Activated CD8-positive, alpha-beta T cell treated with anti-CD3 and anti-CD28 coated beads for 36 hours (primary cell): ENCODE measurements at regions of chr6 and their contacts with region 1.

Region 1: DNA sequence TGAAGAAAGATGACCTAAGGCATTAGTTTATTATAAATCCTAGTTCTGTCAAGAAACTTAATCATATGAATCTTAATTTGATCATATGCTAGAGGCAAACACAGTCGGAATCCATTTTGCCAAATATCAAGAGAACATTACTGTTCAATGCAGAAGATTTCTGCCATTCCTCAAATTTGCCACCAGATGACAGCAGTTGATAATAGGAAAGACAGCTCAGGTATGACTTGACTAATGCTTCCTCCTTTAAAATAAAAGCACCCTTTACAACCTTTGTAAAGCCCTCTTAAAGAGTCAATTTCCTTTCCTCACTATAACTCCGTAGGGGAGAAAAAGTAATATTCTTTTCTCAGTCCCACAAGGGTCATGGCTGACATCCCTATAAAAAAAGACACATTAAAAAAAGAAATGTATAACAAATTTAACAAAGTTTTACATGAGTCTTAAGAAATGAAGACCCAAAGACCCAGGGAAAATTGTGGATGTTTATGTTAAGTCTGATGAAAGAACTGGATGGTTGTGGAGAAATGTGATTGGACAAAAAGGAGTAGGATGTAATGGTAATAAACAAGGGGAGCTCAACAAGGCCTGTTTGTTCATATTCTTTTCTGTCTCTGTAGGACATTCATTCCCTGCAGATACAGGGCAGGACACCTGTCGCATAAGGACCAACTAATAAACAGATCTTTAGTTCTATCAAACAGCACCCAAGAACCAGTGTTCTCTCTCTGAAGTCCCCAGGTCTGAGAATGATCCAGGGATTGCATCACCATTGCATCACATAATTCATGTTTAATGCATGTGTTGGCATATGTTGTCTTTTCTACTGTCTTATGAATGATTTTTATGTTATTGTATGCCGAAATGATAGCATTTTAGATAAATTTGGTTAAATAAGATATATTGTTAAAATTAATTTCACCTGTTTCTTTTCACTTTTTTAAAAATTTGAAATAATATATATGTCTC is 23.0 kb upstream of the IL17A start:
- DNase-seq: no peak
- ATAC-seq: peak; percentile 48
- H3K4me3 Mint-ChIP-seq: no peak overlapping the region
- H3K27ac Mint-ChIP-seq: peak overlapping the region; percentile 90
- H3K4me1 Mint-ChIP-seq: peaks cover 34% of the 10 kb centered on the region
- H3K27me3 Mint-ChIP-seq: peaks cover 21% of the 10 kb centered on the region
- CTCF ChIP-seq: peak; percentile 75

Region 2: DNA sequence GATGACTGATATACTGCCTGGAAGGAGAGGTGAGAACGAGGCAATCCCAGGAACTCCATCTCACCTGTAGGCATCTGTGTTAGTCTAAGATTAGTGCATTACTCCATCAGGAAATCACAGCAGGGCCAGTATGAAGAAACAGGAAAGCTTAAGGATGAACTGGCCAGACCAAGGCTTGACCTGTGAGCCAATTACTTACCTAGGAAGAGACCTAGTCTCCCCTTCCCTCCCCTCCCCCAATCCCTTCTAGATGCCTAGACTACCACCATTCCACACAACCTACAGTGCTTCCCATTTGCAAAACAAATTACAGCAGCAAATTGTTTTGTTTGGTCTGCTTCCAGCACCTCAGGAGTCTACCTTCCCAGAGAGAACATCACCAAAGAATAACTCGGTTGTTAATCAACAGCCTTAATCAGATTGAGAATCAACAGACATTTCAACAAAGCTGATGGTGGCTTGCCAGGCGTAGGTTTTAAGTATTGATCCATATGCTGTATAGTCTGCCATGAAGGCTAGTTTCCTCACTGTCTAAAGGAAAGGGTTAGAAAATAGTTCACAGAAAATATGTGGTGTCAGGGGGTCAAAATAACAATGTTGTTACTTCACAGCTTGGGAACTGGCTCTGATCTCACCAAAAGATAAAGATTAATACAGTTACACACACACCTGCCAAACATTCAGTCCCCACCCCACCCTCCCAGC is 85.9 kb before region 1 on chr6:
- CTCF ChIA-PET with region 1: no interaction called
- POLR2A ChIA-PET with region 1: no interaction called
- intact Hi-C with region 1: no loop called
- DNase-seq: no peak
- ATAC-seq: no peak
- H3K4me3 Mint-ChIP-seq: no peak overlapping the region
- H3K27ac Mint-ChIP-seq: no peak overlapping the region
- H3K4me1 Mint-ChIP-seq: no peaks in the 10 kb centered on the region
- H3K27me3 Mint-ChIP-seq: peaks cover 21% of the 10 kb centered on the region
- CTCF ChIP-seq: no peak

Region 3: GRCh38 chr6:52098634-52099185 is 64.5 kb before region 1 on chr6:
- CTCF ChIA-PET with region 1: interaction called, 3 read pairs
- POLR2A ChIA-PET with region 1: no interaction called
- intact Hi-C with region 1: loop called (anchors 5 kb)
- DNase-seq: no peak
- ATAC-seq: peak; percentile 34
- H3K4me3 Mint-ChIP-seq: no peak overlapping the region
- H3K27ac Mint-ChIP-seq: no peak overlapping the region
- H3K4me1 Mint-ChIP-seq: no peaks in the 10 kb centered on the region
- H3K27me3 Mint-ChIP-seq: peaks cover 29% of the 10 kb centered on the region
- CTCF ChIP-seq: peak; percentile 20

Region 4: DNA sequence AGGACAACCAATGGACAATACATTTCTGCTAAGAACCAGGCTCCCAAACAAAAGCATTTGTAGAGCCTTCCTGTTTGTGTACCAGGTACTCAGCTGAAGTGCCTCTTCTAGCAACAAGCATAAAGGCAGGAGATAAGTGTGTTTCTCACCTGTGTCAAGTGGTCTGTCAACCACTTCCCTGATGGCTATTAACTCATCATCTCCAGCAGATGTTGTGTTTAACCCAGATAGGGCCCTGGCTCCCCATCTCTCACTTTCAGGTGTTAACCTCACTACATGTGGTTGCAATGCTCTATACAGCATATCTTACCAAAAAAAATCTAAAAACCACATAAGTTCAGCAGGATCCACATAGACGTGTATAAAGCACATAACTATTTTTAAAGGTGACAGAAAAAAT is 13.3 kb after region 1 on chr6:
- CTCF ChIA-PET with region 1: interaction called, 18 read pairs
- POLR2A ChIA-PET with region 1: interaction called, 3 read pairs
- intact Hi-C with region 1: no loop called
- DNase-seq: peak; percentile 63
- ATAC-seq: peak; percentile 86
- H3K4me3 Mint-ChIP-seq: no peak overlapping the region
- H3K27ac Mint-ChIP-seq: no peak overlapping the region
- H3K4me1 Mint-ChIP-seq: peaks cover 19% of the 10 kb centered on the region
- H3K27me3 Mint-ChIP-seq: peaks cover 17% of the 10 kb centered on the region
- CTCF ChIP-seq: no peak

Region 5: GRCh38 chr6:52207066-52207465 is 43.8 kb after region 1 on chr6:
- CTCF ChIA-PET with region 1: no interaction called
- POLR2A ChIA-PET with region 1: no interaction called
- intact Hi-C with region 1: no loop called
- DNase-seq: no peak
- ATAC-seq: no peak
- H3K4me3 Mint-ChIP-seq: no peak overlapping the region
- H3K27ac Mint-ChIP-seq: no peak overlapping the region
- H3K4me1 Mint-ChIP-seq: no peaks in the 10 kb centered on the region
- H3K27me3 Mint-ChIP-seq: peaks cover 25% of the 10 kb centered on the region
- CTCF ChIP-seq: no peak

Region 6: DNA sequence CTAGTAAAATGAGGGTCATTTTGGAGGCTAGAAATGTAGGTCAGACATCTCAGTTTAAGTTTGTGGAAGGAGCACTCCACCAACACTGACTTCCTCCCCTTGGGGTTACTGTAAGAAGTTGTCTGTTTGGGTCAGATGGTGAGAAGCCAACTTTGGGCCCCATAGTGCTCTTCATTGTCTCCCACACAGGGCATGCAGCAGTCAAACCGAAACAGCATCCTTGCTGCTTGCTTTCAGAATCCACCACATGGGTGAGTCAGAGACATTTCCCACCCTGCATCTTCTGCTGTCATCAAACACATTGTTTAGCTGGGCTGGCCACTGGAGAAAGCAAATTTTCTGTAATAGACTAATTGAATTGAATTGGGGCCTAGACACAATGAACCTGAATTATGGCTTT is 64.3 kb after region 1 on chr6:
- CTCF ChIA-PET with region 1: interaction called, 67 read pairs
- POLR2A ChIA-PET with region 1: interaction called, 3 read pairs
- intact Hi-C with region 1: loop called (anchors 2 kb)
- DNase-seq: peak; percentile 93
- ATAC-seq: peak; percentile 94
- H3K4me3 Mint-ChIP-seq: no peak overlapping the region
- H3K27ac Mint-ChIP-seq: no peak overlapping the region
- H3K4me1 Mint-ChIP-seq: peaks cover 28% of the 10 kb centered on the region
- H3K27me3 Mint-ChIP-seq: peaks cover 37% of the 10 kb centered on the region
- CTCF ChIP-seq: no peak

Region 7: GRCh38 chr6:52233975-52234823 is 71.0 kb after region 1 on chr6:
- CTCF ChIA-PET with region 1: interaction called, 67 read pairs
- POLR2A ChIA-PET with region 1: interaction called, 3 read pairs
- intact Hi-C with region 1: loop called (anchors 2 kb)
- DNase-seq: peak; percentile 62
- ATAC-seq: peak; percentile 71
- H3K4me3 Mint-ChIP-seq: no peak overlapping the region
- H3K27ac Mint-ChIP-seq: no peak overlapping the region
- H3K4me1 Mint-ChIP-seq: peaks cover 13% of the 10 kb centered on the region
- H3K27me3 Mint-ChIP-seq: peaks cover 44% of the 10 kb centered on the region
- CTCF ChIP-seq: peak; percentile 27

Region 8: DNA sequence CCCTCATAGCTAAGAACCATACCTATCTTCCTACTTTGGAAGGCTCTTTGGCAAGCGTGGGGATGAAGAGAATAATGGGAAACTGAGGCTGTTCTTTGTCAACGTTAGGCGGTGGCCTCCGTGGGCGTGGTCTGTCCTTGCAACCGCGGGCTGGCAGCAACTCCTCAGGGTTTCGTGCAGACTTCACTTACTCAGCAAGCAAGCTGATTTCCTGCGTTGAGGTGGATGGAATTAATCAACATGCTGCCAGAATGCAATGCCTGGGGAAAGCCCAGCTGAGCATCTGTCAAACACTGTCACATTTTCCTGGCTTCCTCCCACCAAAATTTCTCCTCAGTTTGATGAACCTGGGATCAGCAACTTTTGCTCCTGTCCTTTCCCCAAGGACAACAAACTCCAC is 90.3 kb after region 1 on chr6:
- CTCF ChIA-PET with region 1: interaction called, 15 read pairs
- POLR2A ChIA-PET with region 1: no interaction called
- intact Hi-C with region 1: no loop called
- DNase-seq: peak; percentile 54
- ATAC-seq: no peak
- H3K4me3 Mint-ChIP-seq: no peak overlapping the region
- H3K27ac Mint-ChIP-seq: no peak overlapping the region
- H3K4me1 Mint-ChIP-seq: peaks cover 40% of the 10 kb centered on the region
- H3K27me3 Mint-ChIP-seq: peaks cover 27% of the 10 kb centered on the region
- CTCF ChIP-seq: no peak

Region 9: GRCh38 chr6:52399511-52400312 is 236.5 kb after region 1 on chr6:
- CTCF ChIA-PET with region 1: no interaction called
- POLR2A ChIA-PET with region 1: no interaction called
- intact Hi-C with region 1: loop called (anchors 5 kb)
- DNase-seq: peak; percentile 57
- ATAC-seq: peak; percentile 51
- H3K4me3 Mint-ChIP-seq: no peak overlapping the region
- H3K27ac Mint-ChIP-seq: peak overlapping the region; percentile 78
- H3K4me1 Mint-ChIP-seq: peaks cover 65% of the 10 kb centered on the region
- H3K27me3 Mint-ChIP-seq: no peaks in the 10 kb centered on the region
- CTCF ChIP-seq: peak; percentile 91